IMR-90 (cell line): ENCODE measurements at regions of chr2 and their contacts with region 1.

Region 1: GRCh38 chr2:54065411-54065810 is 50.0 kb upstream of the ACYP2 start:
- DNase-seq: peak; percentile 98
- ATAC-seq: peak; percentile 97
- H3K4me3 ChIP-seq: no peak overlapping the region
- H3K27ac ChIP-seq: no peak overlapping the region
- H3K4me1 ChIP-seq: peaks cover 7% of the 10 kb centered on the region
- H3K27me3 ChIP-seq: no peaks in the 10 kb centered on the region
- CTCF ChIP-seq: no peak
- POLR2A ChIP-seq: no peak
- RAD21 ChIP-seq: no peak; the same call in 1 of the 2 replicates

Region 2: GRCh38 chr2:52289776-52290175 is 1775.6 kb before region 1 on chr2:
- CTCF ChIA-PET with region 1: no interaction called
- POLR2A ChIA-PET with region 1: no interaction called
- dilution Hi-C with region 1: no loop called
- in situ Hi-C with region 1: no loop called
- intact Hi-C with region 1: no loop called
- DNase-seq: peak; percentile 36
- ATAC-seq: peak; percentile 63
- H3K4me3 ChIP-seq: no peak overlapping the region
- H3K27ac ChIP-seq: no peak overlapping the region
- H3K4me1 ChIP-seq: no peaks in the 10 kb centered on the region
- H3K27me3 ChIP-seq: no peaks in the 10 kb centered on the region
- CTCF ChIP-seq: no peak
- POLR2A ChIP-seq: no peak
- RAD21 ChIP-seq: no peak

Region 3: DNA sequence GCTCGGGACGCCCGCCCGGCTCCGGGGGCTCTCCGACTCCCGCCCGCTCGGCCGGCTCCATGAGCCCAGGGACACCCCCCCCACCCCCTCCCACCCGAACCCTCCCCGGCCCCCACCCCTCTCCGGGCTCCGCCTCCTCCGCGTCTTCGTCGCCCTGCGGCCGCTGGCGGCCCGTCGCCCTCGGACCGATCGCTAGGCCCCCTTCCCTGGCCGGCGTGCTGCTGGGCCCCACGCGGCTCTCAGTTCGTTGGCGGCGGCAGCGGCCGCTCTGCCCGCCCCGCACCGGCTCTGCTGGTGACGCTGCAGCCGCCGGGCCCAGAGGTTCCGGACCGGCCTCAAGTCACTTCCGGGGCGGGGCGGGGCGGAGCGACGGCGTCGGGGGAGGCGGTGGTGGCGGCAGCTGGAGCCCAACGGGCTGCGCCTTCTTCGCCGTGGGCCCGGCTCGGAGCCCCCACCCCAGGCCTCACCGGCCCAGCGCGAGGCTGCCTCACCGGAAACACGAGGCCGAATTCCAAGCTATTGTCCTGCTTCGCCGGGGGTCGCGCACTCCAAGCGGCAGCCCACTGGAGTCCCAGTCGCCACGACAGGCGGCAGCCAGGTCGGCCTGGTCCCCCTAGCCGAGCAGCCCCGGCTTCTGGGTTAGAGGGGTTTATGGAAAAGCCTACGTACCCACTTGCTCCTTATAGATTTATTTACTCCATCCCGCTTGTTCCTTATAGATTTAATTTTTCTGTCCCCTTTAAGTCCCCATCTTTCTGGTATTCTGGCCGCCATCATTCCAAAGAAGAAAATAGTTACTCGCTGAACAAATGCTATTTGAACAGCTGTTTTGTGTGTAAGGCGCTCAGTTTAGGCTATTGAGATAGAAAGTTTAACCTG is 94.4 kb before region 1 on chr2 and contains the start of gene PSME4:
- CTCF ChIA-PET with region 1: no interaction called
- POLR2A ChIA-PET with region 1: interaction called, 3 read pairs
- dilution Hi-C with region 1: no loop called
- in situ Hi-C with region 1: no loop called
- intact Hi-C with region 1: loop called (anchors 5 kb)
- DNase-seq: peak; percentile 84
- ATAC-seq: peak; percentile 90
- H3K4me3 ChIP-seq: peak within 1 kb of the TSS; percentile 100
- H3K27ac ChIP-seq: peak within 1 kb of the TSS; percentile 99
- H3K4me1 ChIP-seq: peaks cover 6% of the 10 kb centered on the region; the same call in 1 of the 2 replicates
- H3K27me3 ChIP-seq: no peaks in the 10 kb centered on the region
- CTCF ChIP-seq: no peak
- POLR2A ChIP-seq: peak; percentile 97
- RAD21 ChIP-seq: no peak
- total RNA-seq, gene PSME4: 58.9 and 61.3 TPM in 2 replicates

Region 4: DNA sequence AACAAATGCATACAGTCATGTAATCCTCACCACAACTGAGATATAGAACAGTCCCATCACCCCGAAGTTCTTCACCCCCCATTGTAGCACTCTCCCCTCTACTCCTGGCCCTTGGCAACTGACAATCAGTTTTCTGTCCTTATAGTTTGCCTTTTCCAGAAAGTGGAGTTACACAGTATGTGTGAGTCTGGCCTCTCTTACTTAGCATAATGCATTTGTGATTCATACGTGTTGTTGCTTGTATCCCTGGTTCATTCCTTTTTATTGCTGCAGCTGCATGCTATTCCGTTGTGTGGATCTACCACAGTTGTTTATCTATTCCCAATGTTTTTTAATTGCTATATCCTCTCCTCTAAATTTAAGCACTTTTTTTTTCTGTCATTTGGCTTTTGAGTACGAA is 67.6 kb after region 1 on chr2:
- CTCF ChIA-PET with region 1: no interaction called
- POLR2A ChIA-PET with region 1: no interaction called
- dilution Hi-C with region 1: no loop called
- in situ Hi-C with region 1: no loop called
- intact Hi-C with region 1: no loop called
- DNase-seq: no peak
- ATAC-seq: no peak
- H3K4me3 ChIP-seq: no peak overlapping the region
- H3K27ac ChIP-seq: no peak overlapping the region
- H3K4me1 ChIP-seq: no peaks in the 10 kb centered on the region
- H3K27me3 ChIP-seq: no peaks in the 10 kb centered on the region
- CTCF ChIP-seq: no peak
- POLR2A ChIP-seq: no peak
- RAD21 ChIP-seq: no peak